ENCODE measurements at regions of chr4 and their contacts with region 1.

Region 1: GRCh38 chr4:140359562-140360427 is 13.7 kb upstream of the SCOC start:
- DNase-seq: peak; percentile 85
- H3K4me3 ChIP-seq: no peak overlapping the region
- H3K27ac ChIP-seq: no peak overlapping the region
- H3K4me1 ChIP-seq: no peaks in the 10 kb centered on the region
- H3K27me3 ChIP-seq: peaks cover 7% of the 10 kb centered on the region; the same call in 1 of the 2 replicates

Region 2: DNA sequence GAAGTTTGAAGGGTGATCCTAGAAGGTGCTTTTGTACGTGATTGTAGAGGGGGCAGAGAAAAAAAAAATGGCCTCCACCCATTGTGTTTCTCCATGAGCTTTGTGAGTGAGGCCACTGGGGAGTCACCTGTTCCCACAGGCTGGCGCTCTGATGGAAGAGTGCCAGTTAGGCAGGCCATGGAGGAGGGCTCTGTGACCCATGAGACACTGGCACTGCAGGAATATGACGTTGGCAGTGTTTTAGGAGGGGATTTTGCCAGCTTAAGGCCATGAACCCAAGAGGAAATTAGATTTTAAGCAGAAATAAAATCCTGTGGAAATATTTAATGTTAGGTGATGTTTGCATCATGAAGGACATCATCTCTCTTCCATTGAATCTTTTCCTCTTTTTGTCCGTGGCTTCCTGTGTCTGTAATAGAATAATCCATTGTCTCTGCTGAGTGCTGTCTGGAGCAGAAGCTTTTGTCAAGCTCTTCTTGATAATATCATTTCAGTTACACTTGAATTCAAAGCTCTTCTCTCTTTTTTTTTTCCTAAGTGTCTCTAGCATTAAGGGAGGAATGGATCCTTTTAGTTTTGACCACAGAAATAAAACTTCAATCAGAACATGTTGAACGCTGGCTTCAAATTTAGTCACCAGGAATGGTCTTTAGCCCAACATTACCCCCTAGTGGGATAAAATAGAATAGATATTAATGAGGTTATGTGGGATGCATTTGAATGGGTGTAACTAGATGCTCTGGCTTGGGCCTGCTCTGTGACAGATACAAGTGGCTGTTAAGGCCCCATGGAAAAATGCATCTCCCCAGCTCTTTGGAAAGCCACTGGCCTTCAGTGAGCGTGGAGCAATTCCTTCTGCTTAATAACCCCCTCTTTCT is 250.0 kb after region 1 on chr4:
- in situ Hi-C with region 1: loop called (anchors 25 kb)
- DNase-seq: peak; percentile 72
- H3K4me3 ChIP-seq: no peak overlapping the region
- H3K27ac ChIP-seq: no peak overlapping the region
- H3K4me1 ChIP-seq: no peaks in the 10 kb centered on the region
- H3K27me3 ChIP-seq: peaks cover 5% of the 10 kb centered on the region; the same call in 1 of the 2 replicates

Region 3: GRCh38 chr4:140839888-140840790 is 480.3 kb after region 1 on chr4:
- in situ Hi-C with region 1: loop called (anchors 10 kb)
- DNase-seq: no peak
- H3K4me3 ChIP-seq: no peak overlapping the region
- H3K27ac ChIP-seq: no peak overlapping the region
- H3K4me1 ChIP-seq: no peaks in the 10 kb centered on the region
- H3K27me3 ChIP-seq: peaks cover 12% of the 10 kb centered on the region

Region 4: DNA sequence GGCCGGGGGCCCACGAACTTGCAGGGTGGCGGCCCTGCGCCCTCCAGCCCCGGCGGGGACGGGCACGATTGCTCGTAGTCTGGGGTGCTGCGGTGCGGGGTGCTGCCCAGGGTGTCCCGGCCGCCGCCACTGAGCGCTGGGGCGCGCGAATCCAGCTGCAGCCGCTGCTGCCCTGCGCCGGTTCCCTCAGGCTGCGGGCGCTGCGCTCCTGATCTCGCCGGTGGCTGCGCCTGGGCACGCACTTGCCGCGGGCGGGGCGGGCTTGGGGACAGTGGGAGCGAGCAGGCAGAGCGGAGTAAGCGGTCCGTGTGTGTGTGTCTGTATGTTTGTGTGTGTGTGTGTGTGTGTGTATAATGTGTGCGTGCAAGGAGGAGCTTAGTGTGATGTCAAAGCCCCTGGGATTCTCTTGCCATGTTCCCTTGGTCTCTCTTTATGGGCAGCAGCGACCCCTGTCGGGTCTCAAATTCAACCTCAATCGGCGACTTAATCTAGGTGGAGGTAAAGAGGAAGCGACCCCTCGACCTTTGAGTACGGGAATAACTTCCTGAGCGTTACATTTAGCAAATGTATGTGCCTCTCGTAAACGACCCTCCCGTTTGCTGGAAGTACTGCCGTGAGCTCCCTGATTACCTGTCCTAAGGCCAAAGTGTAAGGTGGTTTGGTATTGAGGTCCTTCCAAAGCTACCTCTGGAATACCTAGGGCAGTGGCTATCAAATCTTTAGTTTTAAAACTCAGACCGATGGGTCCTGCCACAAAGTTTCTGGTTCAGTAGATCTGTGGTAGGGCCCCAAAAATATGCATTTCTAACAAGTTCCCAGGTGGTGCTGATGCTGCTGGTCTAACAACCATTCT is 773.6 kb after region 1 on chr4 and contains the start of gene RNF150:
- in situ Hi-C with region 1: loop called (anchors 25 kb)
- DNase-seq: peak; percentile 92
- H3K4me3 ChIP-seq: peak within 1 kb of the TSS; percentile 96
- H3K27ac ChIP-seq: peak within 1 kb of the TSS; percentile 15; the same call in 1 of the 2 replicates
- H3K4me1 ChIP-seq: peaks cover 21% of the 10 kb centered on the region
- H3K27me3 ChIP-seq: no peaks in the 10 kb centered on the region
- total RNA-seq, gene RNF150: 10.5 and 11.6 TPM in 2 replicates

Measured in GM23248 (cell line).